ENCODE measurements at regions of chr13 and their contacts with region 1.

Region 1: DNA sequence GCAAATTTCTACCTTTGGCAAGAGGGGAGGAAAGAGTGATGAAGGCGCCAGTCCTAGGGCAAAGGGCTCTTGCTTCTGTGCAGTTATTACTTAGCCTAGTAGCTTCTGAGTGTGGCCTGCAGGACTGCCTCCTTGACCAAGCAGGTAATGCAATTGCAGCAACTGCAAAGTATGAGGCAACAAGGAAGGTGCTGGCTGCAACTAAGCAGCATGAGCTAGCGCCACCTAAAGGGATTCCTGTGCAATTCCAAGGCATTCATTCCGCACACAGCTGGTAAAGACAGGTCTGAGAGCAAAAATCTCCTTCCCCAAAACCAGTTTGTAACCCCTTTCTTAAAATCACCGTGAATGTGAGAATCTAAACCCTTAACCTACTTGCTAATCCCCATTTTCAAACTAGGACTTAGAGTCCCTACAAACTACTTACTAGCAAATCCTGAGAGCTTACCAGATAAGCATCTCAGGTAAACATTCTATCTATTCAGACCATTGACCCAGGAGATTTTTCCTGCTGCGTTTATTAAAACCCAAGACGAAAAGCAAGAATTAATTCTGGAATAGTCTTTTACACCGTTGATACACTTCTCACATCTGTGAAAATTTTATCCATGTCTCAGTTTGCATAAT is 62.9 kb downstream of the DCT start:
- DNase-seq: peak; percentile 19
- ATAC-seq: no peak
- H3K4me3 Mint-ChIP-seq: no peak overlapping the region
- H3K27ac Mint-ChIP-seq: peak overlapping the region; percentile 9
- H3K4me1 Mint-ChIP-seq: peaks cover 71% of the 10 kb centered on the region
- H3K27me3 Mint-ChIP-seq: peaks cover 12% of the 10 kb centered on the region

Region 2: GRCh38 chr13:93794197-93794885 is 622.2 kb before region 1 on chr13:
- CTCF ChIA-PET with region 1: no interaction called
- POLR2A ChIA-PET with region 1: no interaction called
- intact Hi-C with region 1: loop called (anchors 1 kb)
- DNase-seq: peak; percentile 76
- ATAC-seq: peak; percentile 96
- H3K4me3 Mint-ChIP-seq: no peak overlapping the region
- H3K27ac Mint-ChIP-seq: no peak overlapping the region
- H3K4me1 Mint-ChIP-seq: peaks cover 10% of the 10 kb centered on the region
- H3K27me3 Mint-ChIP-seq: peaks cover 31% of the 10 kb centered on the region

Region 3: GRCh38 chr13:94192431-94192975 is 224.1 kb before region 1 on chr13:
- CTCF ChIA-PET with region 1: no interaction called
- POLR2A ChIA-PET with region 1: no interaction called
- intact Hi-C with region 1: no loop called
- DNase-seq: peak; percentile 29
- ATAC-seq: peak; percentile 39
- H3K4me3 Mint-ChIP-seq: no peak overlapping the region
- H3K27ac Mint-ChIP-seq: no peak overlapping the region
- H3K4me1 Mint-ChIP-seq: no peaks in the 10 kb centered on the region
- H3K27me3 Mint-ChIP-seq: no peaks in the 10 kb centered on the region

Region 4: GRCh38 chr13:94327318-94327717 is 89.2 kb before region 1 on chr13:
- CTCF ChIA-PET with region 1: no interaction called
- POLR2A ChIA-PET with region 1: no interaction called
- intact Hi-C with region 1: loop called in 1 of 2 experiments (anchors 5 kb)
- DNase-seq: no peak
- ATAC-seq: peak; percentile 53
- H3K4me3 Mint-ChIP-seq: no peak overlapping the region
- H3K27ac Mint-ChIP-seq: peak overlapping the region; percentile 37
- H3K4me1 Mint-ChIP-seq: peaks cover 64% of the 10 kb centered on the region
- H3K27me3 Mint-ChIP-seq: peaks cover 10% of the 10 kb centered on the region

Region 5: GRCh38 chr13:94339116-94339687 is 77.4 kb before region 1 on chr13:
- CTCF ChIA-PET with region 1: no interaction called
- POLR2A ChIA-PET with region 1: no interaction called
- intact Hi-C with region 1: no loop called
- DNase-seq: no peak
- ATAC-seq: no peak
- H3K4me3 Mint-ChIP-seq: no peak overlapping the region
- H3K27ac Mint-ChIP-seq: no peak overlapping the region
- H3K4me1 Mint-ChIP-seq: no peaks in the 10 kb centered on the region
- H3K27me3 Mint-ChIP-seq: peaks cover 3% of the 10 kb centered on the region

Region 6: GRCh38 chr13:94435604-94436226 is 19.1 kb after region 1 on chr13:
- CTCF ChIA-PET with region 1: interaction called, 11 read pairs
- POLR2A ChIA-PET with region 1: no interaction called
- intact Hi-C with region 1: loop called (anchors 1 to 2 kb)
- DNase-seq: no peak
- ATAC-seq: peak; percentile 65
- H3K4me3 Mint-ChIP-seq: no peak overlapping the region
- H3K27ac Mint-ChIP-seq: no peak overlapping the region
- H3K4me1 Mint-ChIP-seq: peaks cover 33% of the 10 kb centered on the region
- H3K27me3 Mint-ChIP-seq: no peaks in the 10 kb centered on the region

Region 7: DNA sequence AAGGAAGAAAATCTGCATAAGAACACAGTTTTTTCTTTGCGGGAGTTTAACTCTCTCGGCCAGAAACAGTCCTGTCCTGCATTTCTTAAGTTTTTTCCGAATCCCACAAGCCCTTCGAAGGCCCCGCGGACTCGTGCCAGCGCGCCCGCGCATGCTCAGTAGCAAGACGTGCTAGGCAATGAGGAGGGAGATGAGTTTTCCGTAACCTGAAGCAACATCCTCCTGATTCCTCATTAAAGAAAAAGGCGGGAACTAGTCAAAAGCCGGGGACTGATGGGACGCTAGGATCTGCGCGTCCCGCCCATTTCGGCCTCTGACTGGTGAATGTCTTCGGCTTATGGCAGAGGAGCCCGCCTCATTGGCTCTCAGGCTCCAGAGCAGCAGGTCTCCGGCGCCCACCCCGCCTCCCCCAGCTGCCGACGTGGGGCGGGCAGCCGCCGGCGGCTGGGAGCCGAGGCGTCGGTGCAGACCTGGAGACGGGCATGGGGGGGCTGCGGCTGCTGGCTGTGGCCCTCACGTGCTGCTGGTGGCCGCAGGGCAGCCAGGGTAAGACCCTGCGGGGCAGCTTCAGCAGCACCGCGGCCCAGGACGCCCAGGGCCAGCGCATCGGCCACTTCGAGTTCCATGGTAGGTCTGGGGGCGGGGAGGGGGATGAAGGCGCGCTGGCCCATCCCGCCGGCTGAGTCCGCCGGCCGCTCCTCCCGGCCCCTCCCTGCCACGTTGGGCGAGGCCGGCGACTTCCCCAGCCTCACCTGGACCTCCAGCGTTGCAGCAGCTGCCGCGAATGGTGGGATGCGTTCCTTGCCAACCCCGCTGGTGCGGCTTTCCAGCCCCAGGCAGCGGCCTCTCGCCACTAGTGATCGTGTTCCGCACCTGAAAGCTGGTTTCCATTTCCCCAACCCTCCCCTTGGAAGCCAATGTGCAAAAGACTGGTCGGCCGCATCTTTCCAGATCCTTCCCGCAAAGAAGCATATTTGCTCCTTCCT is 185.2 kb after region 1 on chr13 and contains the start of gene GPR180:
- CTCF ChIA-PET with region 1: no interaction called
- POLR2A ChIA-PET with region 1: no interaction called
- intact Hi-C with region 1: loop called (anchors 1 to 5 kb)
- DNase-seq: peak; percentile 95
- ATAC-seq: peak; percentile 100
- H3K4me3 Mint-ChIP-seq: peak within 1 kb of the TSS; percentile 89
- H3K27ac Mint-ChIP-seq: peak within 1 kb of the TSS; percentile 77
- H3K4me1 Mint-ChIP-seq: peaks cover 31% of the 10 kb centered on the region
- H3K27me3 Mint-ChIP-seq: no peaks in the 10 kb centered on the region
- total RNA-seq, gene GPR180: 8.0 to 8.6 TPM

Region 8: GRCh38 chr13:95050800-95051615 is 634.4 kb after region 1 on chr13:
- CTCF ChIA-PET with region 1: no interaction called
- POLR2A ChIA-PET with region 1: no interaction called
- intact Hi-C with region 1: loop called in 1 of 2 experiments (anchors 1 kb)
- DNase-seq: peak; percentile 24
- ATAC-seq: peak; percentile 86
- H3K4me3 Mint-ChIP-seq: no peak overlapping the region
- H3K27ac Mint-ChIP-seq: no peak overlapping the region
- H3K4me1 Mint-ChIP-seq: peaks cover 21% of the 10 kb centered on the region
- H3K27me3 Mint-ChIP-seq: no peaks in the 10 kb centered on the region

Region 9: DNA sequence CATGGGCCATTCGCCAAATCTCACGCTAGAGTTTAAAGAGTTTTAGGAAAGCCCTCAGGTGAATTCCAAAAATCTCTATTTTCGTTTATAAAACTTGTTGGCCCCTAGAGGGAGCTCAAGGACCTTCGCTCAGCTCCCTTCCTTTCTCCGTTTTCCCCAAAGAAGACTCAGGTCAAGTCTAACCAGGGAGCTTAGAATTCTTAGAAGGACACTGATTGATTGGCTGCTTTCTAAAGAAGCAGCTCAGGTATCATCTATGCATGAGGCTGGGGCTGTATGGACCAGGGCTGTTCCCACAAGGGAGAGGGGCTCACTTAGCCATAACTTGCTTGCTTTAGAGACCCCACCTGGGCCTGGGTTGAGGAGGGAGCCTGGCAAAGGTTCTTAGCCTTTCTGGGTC is 1207.5 kb after region 1 on chr13:
- CTCF ChIA-PET with region 1: no interaction called
- POLR2A ChIA-PET with region 1: no interaction called
- intact Hi-C with region 1: no loop called
- DNase-seq: peak; percentile 32
- ATAC-seq: peak; percentile 49
- H3K4me3 Mint-ChIP-seq: no peak overlapping the region
- H3K27ac Mint-ChIP-seq: no peak overlapping the region
- H3K4me1 Mint-ChIP-seq: no peaks in the 10 kb centered on the region
- H3K27me3 Mint-ChIP-seq: peaks cover 9% of the 10 kb centered on the region

Measured in activated CD4-positive, alpha-beta T cell treated with anti-CD3 and anti-CD28 coated beads for 36 hours (primary cell).